WTC11 (cell line): ENCODE measurements at regions of chr19 and their contacts with region 1.

Region 1: DNA sequence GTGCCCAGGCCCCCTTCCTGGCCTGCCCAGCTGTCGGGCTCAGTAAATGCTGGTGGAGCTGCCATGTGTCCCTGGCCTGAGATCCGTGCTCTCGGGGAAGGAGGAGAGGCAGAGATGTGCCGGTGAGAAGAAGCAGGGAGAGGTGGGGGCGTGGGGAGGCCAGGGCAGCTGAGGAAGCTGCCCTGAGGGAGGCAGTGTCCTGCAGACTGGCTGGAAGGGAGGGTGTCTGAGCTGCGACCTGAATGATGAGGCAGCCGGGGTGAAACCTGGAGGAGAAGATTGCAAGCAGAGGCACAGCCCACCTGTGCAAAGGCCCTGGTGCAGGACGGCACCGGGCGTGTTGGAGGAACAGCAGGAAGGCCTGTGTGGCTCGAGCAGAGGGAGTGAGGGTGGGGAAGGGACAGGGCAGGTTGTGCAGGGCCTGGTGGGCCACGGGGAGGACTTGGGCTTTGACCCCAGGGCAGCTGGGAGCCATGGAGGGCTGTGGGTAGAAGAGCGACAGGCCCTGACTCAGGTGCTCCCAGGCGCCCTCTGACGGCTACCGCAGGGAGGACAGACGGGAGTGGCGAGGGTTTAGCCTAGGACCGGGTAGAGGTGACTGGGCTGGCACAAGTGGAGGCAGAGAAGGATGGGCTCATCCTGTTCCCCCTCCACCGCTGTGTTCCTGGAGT is 14.0 kb upstream of the CELF5 start:
- DNase-seq: peak; percentile 81
- ATAC-seq: peak; percentile 91
- H3K4me3 Mint-ChIP-seq: no peak overlapping the region
- H3K27ac Mint-ChIP-seq: no peak overlapping the region; the same call in 1 of the 2 replicates
- H3K4me1 Mint-ChIP-seq: peaks cover 3% of the 10 kb centered on the region; the same call in 1 of the 2 replicates
- H3K27me3 Mint-ChIP-seq: no peaks in the 10 kb centered on the region
- CTCF ChIP-seq: peak; percentile 25; the same call in 1 of the 2 replicates

Region 2: GRCh38 chr19:3224346-3225168 is 14.1 kb after region 1 on chr19 and contains the start of gene CELF5:
- CTCF ChIA-PET with region 1: interaction called, 18 read pairs
- POLR2A ChIA-PET with region 1: no interaction called
- DNase-seq: peak; percentile 68
- ATAC-seq: peak; percentile 60
- H3K4me3 Mint-ChIP-seq: peak within 1 kb of the TSS; percentile 59
- H3K27ac Mint-ChIP-seq: no peak within 1 kb of the TSS
- H3K4me1 Mint-ChIP-seq: peaks cover 7% of the 10 kb centered on the region
- H3K27me3 Mint-ChIP-seq: peaks cover 8% of the 10 kb centered on the region; the same call in 1 of the 2 replicates
- CTCF ChIP-seq: peak; percentile 48; the same call in 1 of the 2 replicates
- total RNA-seq, gene CELF5: 7.7 to 10.6 TPM (median 9.0 TPM) in 3 replicates